Activated CD8-positive, alpha-beta T cell treated with anti-CD3 and anti-CD28 coated beads for 36 hours (primary cell): ENCODE measurements at regions of chr4 and their contacts with region 1.

Region 1: GRCh38 chr4:7101692-7102515 is 34.0 kb upstream of the GRPEL1 start:
- DNase-seq: peak; percentile 73
- ATAC-seq: peak; percentile 64
- H3K4me3 Mint-ChIP-seq: peak overlapping the region; percentile 86
- H3K27ac Mint-ChIP-seq: no peak overlapping the region
- H3K4me1 Mint-ChIP-seq: peaks cover 10% of the 10 kb centered on the region
- H3K27me3 Mint-ChIP-seq: no peaks in the 10 kb centered on the region
- CTCF ChIP-seq: peak; percentile 66

Region 2: DNA sequence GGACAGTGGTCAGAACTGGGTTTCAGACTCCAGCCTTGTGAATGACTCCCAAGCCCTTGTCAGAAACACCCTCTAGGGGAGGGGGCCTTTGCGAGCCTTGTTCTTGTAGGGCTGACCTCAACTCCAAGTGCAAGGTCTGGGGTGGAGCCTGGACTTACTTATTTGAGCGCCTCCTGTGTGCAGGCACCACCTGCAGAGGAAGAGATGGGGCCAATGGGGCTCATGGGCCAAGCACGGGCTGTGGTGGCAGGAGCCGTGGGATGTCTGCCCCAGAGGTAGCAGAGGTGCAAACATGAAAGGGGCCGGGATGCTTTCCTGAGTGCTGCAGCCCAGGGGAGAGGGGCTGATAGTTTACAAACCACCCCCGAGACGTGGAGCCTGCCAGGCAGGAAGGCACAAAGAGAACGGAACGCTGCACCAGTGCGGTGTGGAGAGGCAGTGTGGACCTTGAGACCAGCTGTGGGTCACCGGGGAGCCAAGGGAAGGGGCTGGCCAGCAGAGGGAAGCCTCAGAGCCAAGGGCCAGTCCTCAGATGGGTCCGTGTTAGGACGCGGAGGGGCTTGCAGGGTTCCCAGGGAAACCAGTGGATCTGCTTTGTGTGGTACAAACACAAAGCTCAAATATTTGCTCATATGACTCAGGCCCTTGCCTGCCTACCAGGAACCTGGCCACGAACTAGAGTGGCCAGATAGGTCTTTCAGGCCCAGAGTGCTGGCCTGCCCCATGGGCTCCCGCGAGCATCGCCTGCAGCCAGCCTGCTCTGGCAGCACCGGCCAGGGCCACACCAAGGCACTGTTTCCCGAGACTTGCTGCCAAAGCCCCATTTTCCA is 67.4 kb before region 1 on chr4:
- CTCF ChIA-PET with region 1: no interaction called
- POLR2A ChIA-PET with region 1: no interaction called
- intact Hi-C with region 1: no loop called
- DNase-seq: no peak
- ATAC-seq: no peak
- H3K4me3 Mint-ChIP-seq: no peak overlapping the region
- H3K27ac Mint-ChIP-seq: no peak overlapping the region
- H3K4me1 Mint-ChIP-seq: no peaks in the 10 kb centered on the region
- H3K27me3 Mint-ChIP-seq: no peaks in the 10 kb centered on the region
- CTCF ChIP-seq: no peak

Region 3: DNA sequence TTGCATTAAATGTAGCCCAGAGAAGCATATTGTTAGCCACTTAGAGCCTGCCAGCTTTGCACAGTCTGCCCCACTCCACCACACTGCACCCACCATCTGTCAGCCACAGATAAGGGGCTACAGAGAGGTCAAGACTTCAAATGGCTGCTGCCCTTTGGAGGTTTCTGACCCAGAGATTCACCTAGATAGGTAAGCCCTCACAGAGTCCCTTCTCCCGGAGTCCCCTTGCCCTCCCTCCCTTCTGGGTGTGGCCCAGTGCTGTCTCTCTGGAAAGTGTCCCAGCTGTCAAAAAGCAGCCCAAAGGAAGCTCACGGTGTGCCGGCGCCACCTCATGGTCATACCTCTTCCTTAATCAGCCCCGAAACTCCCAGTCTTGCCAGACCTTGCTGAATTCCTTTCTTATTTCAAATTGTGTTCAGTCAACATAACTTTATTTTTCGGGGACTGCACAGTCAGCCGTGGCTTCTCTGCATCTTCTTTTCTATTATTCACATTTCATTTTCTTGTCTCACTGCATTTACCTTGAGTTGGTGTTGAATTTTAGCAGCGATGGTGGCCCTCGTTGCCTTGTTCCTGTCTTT is 19.9 kb before region 1 on chr4:
- CTCF ChIA-PET with region 1: interaction called, 30 read pairs
- POLR2A ChIA-PET with region 1: interaction called, 3 read pairs
- intact Hi-C with region 1: no loop called
- DNase-seq: peak; percentile 69
- ATAC-seq: peak; percentile 73
- H3K4me3 Mint-ChIP-seq: no peak overlapping the region
- H3K27ac Mint-ChIP-seq: no peak overlapping the region
- H3K4me1 Mint-ChIP-seq: no peaks in the 10 kb centered on the region
- H3K27me3 Mint-ChIP-seq: peaks cover 30% of the 10 kb centered on the region
- CTCF ChIP-seq: peak; percentile 55

Region 4: DNA sequence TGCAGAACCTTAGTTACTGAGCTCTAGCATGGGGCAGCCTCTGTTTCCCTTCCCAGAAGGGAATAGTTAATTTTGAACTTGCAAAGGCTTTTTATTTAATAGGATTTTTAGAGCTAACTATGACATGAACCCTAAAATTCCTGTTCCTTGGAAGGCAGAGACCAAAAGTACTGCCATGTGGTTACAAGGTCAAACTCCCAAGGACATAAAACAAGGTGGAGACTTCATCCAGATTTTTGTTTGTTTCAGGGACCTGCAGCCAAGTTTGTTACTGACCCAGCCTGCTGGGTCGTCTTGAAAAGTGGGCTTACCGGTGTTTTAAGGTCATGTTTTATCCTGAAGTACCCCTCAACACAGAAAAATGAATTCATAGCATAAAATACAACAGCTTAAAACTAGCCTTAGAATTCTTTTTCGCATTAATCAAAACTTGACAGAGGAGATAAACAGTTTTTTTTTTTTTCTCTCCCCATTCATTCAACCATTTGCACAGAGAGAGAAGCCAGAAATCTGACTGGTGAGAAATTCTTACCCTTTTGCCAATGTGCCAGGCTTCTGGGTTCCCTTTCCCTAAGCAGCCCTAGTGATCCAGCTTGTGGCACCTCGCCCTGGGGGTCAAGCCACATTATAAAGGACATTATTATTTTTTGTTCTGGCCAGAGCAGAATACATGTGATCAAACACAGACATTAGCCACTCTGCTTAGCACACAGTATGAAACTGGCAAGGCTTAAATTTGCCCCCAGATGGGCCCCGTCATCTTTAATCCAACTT is 12.5 kb before region 1 on chr4:
- CTCF ChIA-PET with region 1: interaction called, 30 read pairs
- POLR2A ChIA-PET with region 1: interaction called, 3 read pairs
- intact Hi-C with region 1: no loop called
- DNase-seq: no peak
- ATAC-seq: no peak
- H3K4me3 Mint-ChIP-seq: no peak overlapping the region
- H3K27ac Mint-ChIP-seq: no peak overlapping the region
- H3K4me1 Mint-ChIP-seq: no peaks in the 10 kb centered on the region
- H3K27me3 Mint-ChIP-seq: peaks cover 15% of the 10 kb centered on the region
- CTCF ChIP-seq: no peak

Region 5: GRCh38 chr4:7699031-7699430 is 597.1 kb after region 1 on chr4:
- CTCF ChIA-PET with region 1: no interaction called
- POLR2A ChIA-PET with region 1: no interaction called
- intact Hi-C with region 1: no loop called
- DNase-seq: no peak
- ATAC-seq: no peak
- H3K4me3 Mint-ChIP-seq: no peak overlapping the region
- H3K27ac Mint-ChIP-seq: no peak overlapping the region
- H3K4me1 Mint-ChIP-seq: no peaks in the 10 kb centered on the region
- H3K27me3 Mint-ChIP-seq: peaks cover 12% of the 10 kb centered on the region
- CTCF ChIP-seq: no peak